ENCODE measurements at regions of chr11 and their contacts with region 1.

Region 1: GRCh38 chr11:66242095-66242765 is 26.2 kb upstream of the RAB1B start:
- DNase-seq: no peak
- ATAC-seq: no peak
- H3K4me3 ChIP-seq: no peak overlapping the region
- H3K4me3 Mint-ChIP-seq: no peak overlapping the region
- H3K27ac ChIP-seq: no peak overlapping the region
- H3K27ac Mint-ChIP-seq: no peak overlapping the region
- H3K4me1 ChIP-seq: no peaks in the 10 kb centered on the region
- H3K4me1 Mint-ChIP-seq: no peaks in the 10 kb centered on the region
- H3K27me3 ChIP-seq: no peaks in the 10 kb centered on the region
- H3K27me3 Mint-ChIP-seq: no peaks in the 10 kb centered on the region
- CTCF ChIP-seq: no peak

Region 2: DNA sequence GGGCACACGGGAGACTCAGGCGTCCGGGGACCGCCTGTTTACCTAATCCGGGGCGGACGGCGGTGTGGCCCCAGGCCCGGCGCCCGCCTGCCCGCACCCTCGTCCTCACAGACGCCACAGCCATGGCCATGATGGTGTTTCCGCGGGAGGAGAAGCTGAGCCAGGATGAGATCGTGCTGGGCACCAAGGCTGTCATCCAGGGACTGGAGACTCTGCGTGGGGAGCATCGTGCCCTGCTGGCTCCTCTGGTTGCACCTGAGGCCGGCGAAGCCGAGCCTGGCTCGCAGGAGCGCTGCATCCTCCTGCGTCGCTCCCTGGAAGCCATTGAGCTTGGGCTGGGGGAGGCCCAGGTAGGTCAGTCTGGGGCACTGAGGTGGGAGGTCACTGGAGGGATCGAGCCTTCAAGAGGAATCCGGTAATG is 16.3 kb after region 1 on chr11:
- CTCF ChIA-PET with region 1: interaction called, 5 read pairs
- POLR2A ChIA-PET with region 1: no interaction called
- intact Hi-C with region 1: loop called in 1 of 2 experiments (anchors 2 kb)
- DNase-seq: no peak
- ATAC-seq: no peak
- H3K4me3 ChIP-seq: peak overlapping the region; percentile 92
- H3K4me3 Mint-ChIP-seq: peak overlapping the region; percentile 93
- H3K27ac ChIP-seq: peak overlapping the region; percentile 88 to 100
- H3K27ac Mint-ChIP-seq: peak overlapping the region; percentile 73
- H3K4me1 ChIP-seq: peaks cover 25% of the 10 kb centered on the region
- H3K4me1 Mint-ChIP-seq: peaks cover 27% of the 10 kb centered on the region
- H3K27me3 ChIP-seq: no peaks in the 10 kb centered on the region
- H3K27me3 Mint-ChIP-seq: no peaks in the 10 kb centered on the region
- CTCF ChIP-seq: no peak

Region 3: DNA sequence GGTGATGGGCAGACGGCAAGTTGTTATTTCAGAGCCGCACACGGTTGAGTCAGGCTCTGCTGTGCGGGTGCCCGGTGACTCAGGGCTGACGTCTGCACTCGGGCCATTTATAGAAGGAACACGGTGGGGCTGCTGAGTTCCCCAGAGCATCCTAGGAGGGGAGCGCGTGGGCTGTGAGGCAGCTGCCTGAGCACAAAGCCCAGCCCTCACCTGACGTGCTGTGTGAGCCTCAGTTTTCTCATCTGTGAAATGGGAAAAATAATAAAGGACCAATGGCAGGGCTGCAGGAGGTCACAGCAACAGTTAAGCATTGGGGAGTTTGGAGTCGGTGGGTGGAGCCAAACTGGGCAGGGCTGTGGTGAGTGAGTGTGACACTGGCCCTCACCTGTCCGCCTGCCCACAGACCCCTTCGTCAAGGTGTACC is 803.1 kb after region 1 on chr11:
- CTCF ChIA-PET with region 1: no interaction called
- POLR2A ChIA-PET with region 1: no interaction called
- intact Hi-C with region 1: no loop called
- DNase-seq: no peak
- ATAC-seq: no peak
- H3K4me3 ChIP-seq: no peak overlapping the region
- H3K4me3 Mint-ChIP-seq: no peak overlapping the region
- H3K27ac ChIP-seq: no peak overlapping the region
- H3K27ac Mint-ChIP-seq: no peak overlapping the region
- H3K4me1 ChIP-seq: no peaks in the 10 kb centered on the region
- H3K4me1 Mint-ChIP-seq: no peaks in the 10 kb centered on the region
- H3K27me3 ChIP-seq: no peaks in the 10 kb centered on the region
- H3K27me3 Mint-ChIP-seq: peaks cover 9% of the 10 kb centered on the region
- CTCF ChIP-seq: no peak